HepG2 (cell line): ENCODE measurements at regions of chr14 and their contacts with region 1.

Region 1: DNA sequence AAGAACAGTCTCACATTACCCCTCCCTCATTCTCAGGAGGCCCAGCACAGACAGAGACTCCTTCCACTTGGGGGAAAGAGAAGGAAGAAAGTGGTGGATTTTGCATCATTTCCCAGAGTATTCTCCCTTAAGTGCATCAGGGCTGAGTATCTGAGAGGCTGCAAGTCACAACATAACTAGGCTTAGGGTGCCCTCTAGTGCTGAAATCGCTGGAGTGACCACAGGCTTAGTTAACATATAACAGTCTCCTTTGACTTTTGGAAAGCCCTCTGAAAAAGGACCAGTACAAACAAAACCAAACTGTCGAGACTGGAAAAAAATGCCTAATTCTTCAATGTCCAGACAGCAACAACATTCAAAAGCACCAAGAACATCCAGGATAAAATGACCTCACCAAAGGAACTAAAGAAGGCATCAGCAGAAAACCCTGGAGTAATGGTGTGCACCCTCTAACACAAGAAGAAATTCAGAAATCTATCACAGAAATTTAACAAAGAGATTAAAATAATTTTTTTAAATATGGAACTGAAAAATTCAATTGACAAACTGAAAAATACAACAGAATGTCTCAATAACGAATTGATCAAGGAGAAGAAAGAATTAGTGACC is 412.3 kb downstream of the RPS29 start:
- DNase-seq: peak; percentile 63
- ATAC-seq: peak; percentile 98
- H3K4me3 ChIP-seq: no peak overlapping the region
- H3K27ac ChIP-seq: no peak overlapping the region
- H3K4me1 ChIP-seq: no peaks in the 10 kb centered on the region
- H3K27me3 ChIP-seq: no peaks in the 10 kb centered on the region
- CTCF ChIP-seq: peak; percentile 82
- EP300 ChIP-seq: no peak
- POLR2A ChIP-seq: no peak
- RAD21 ChIP-seq: peak; percentile 57

Region 2: DNA sequence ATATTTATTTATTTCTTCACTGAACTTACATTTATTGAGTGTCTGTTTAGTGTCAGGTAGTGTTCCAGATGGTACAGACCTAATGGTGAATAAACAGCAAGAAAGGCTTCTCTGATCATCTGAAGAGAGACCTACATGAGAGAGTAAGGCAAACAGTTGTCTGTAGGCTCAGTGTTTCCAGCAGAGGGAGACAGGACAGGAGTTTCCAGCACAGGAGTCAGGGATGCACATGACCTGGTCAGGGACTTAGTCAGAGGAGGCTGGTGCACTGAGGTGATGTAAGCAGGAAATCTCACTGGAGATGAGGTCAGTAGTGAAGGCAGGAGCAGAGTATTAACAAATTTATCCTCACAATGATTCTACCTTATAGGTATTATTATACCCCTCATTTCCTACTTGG is 1731.7 kb before region 1 on chr14:
- CTCF ChIA-PET with region 1: no interaction called
- POLR2A ChIA-PET with region 1: no interaction called
- in situ Hi-C with region 1: no loop called
- intact Hi-C with region 1: loop called (anchors 10 kb)
- DNase-seq: peak; percentile 35
- ATAC-seq: peak; percentile 95
- H3K4me3 ChIP-seq: no peak overlapping the region
- H3K27ac ChIP-seq: no peak overlapping the region
- H3K4me1 ChIP-seq: no peaks in the 10 kb centered on the region
- H3K27me3 ChIP-seq: no peaks in the 10 kb centered on the region
- CTCF ChIP-seq: peak; percentile 43
- EP300 ChIP-seq: no peak
- POLR2A ChIP-seq: no peak
- RAD21 ChIP-seq: no peak

Region 3: GRCh38 chr14:47917345-47917954 is 1256.4 kb before region 1 on chr14:
- CTCF ChIA-PET with region 1: interaction called, 16 read pairs
- POLR2A ChIA-PET with region 1: no interaction called
- in situ Hi-C with region 1: loop called (anchors 25 kb)
- intact Hi-C with region 1: no loop called
- DNase-seq: peak; percentile 9
- ATAC-seq: no peak
- H3K4me3 ChIP-seq: no peak overlapping the region
- H3K27ac ChIP-seq: no peak overlapping the region
- H3K4me1 ChIP-seq: no peaks in the 10 kb centered on the region
- H3K27me3 ChIP-seq: no peaks in the 10 kb centered on the region
- CTCF ChIP-seq: peak; percentile 49
- EP300 ChIP-seq: no peak
- POLR2A ChIP-seq: no peak
- RAD21 ChIP-seq: no peak